ENCODE measurements at regions of chr17 and their contacts with region 1.

Region 1: DNA sequence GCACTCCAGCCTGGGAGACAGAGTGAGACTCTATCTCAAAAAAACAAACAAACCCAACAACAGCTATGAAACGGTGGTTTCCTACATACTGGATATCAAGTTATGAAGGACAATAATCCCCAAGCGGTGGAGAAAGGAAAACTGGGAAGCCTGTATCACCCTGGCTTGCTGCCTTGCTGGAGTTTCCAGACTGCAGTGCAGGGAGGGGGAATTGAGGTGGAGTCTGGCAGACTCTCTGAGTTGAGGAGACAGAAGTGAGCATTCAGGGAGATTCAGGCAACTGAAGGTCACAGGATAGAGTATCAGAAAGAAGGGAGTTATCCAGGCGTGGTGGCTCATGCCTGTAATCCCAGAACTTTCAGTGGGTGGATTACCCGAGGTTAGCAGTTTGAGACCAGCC is 11.9 kb downstream of the QRICH2 start:
- DNase-seq: no peak
- ATAC-seq: peak; percentile 76

Region 2: DNA sequence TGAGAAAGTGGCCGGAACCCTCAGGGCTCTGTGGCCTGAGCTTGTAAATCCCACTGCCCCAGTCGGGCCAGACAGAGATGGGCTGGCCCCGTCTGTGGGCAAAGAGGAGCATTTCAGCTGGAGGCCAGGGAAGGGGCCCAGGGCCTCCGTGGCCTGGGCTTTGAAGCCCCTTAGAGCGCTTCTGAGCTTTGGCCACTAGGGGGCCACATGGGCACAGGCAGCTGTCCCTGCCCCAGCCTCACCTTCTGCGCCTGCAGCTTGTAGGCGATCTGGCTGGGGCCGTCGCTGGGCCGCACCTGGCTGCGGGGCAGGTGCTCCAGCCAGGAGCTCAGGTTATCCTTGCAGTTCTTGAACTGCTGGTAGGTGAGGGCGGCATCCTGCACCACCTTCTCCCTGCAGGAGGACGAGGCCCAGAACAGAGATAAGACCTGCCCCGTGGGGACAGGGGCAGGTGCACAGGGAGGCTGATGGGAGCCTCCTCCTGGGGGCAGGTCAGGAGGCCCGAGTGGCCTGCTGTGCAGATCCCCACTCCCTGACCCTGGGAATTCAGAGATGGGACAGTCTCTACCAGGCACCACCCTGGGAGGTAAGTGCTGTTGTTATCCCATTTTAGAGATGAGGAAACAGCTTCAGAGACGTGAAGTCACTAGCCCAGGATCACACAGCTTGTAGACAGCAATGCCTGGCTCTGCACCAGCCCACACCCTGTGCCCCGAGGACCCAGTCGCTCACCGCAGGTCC is 281.8 kb before region 1 on chr17:
- intact Hi-C with region 1: loop called (anchors 10 kb)
- DNase-seq: peak; percentile 81
- ATAC-seq: peak; percentile 89